A549 (cell line): ENCODE measurements at regions of chr2 and their contacts with region 1.

Region 1: DNA sequence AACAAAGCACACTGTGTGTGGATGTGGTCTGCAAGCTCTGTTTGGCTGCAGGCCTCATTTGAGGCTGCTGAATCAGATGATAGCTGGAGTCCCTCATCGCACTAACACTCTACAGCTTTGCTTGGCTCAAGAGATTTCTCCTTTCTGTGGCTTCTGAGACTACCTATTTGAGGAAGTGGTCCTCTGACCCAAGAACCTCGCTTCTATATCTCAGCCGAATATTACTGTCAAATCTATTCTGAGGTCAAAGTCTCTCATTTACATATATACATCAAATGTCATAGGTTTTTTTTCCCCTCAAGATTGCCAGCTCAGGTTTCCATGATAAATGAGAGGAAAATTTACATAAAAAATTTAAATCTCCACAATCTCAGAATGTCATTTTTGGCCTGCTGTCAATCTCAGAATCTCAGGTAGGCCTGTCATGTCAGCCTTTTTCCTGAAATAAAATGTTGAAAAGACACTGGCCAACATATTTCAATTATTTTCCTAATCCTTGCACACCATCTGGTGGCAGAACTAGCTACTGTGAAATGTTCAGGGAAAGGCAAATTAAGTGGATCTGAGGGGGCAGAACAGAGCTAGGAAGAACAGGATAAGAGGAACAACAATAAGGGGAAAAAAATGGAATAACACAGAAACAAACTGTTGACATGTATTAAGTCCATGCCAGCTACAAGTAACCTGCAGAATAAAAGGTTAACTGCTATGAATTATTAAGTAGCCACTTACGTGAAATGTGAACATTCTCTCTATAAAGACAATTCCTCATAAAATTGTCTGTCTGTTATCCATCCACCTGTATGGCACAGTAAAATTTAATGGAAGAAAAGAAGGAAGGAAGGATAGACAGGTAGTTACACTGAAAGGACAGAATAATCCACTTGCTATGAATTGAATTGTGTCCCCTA is 39.3 kb downstream of the AP1S3 start:
- DNase-seq: peak; percentile 14 to 66
- ATAC-seq: peak; percentile 79 to 81
- H3K4me3 ChIP-seq: no peak overlapping the region
- H3K27ac ChIP-seq: peak overlapping the region; percentile 75 to 87
- H3K4me1 ChIP-seq: peaks cover 76% of the 10 kb centered on the region
- CTCF ChIP-seq: peak; percentile 88
- EP300 ChIP-seq: no peak
- POLR2A ChIP-seq: no peak
- RAD21 ChIP-seq: peak; percentile 92 to 94

Region 2: DNA sequence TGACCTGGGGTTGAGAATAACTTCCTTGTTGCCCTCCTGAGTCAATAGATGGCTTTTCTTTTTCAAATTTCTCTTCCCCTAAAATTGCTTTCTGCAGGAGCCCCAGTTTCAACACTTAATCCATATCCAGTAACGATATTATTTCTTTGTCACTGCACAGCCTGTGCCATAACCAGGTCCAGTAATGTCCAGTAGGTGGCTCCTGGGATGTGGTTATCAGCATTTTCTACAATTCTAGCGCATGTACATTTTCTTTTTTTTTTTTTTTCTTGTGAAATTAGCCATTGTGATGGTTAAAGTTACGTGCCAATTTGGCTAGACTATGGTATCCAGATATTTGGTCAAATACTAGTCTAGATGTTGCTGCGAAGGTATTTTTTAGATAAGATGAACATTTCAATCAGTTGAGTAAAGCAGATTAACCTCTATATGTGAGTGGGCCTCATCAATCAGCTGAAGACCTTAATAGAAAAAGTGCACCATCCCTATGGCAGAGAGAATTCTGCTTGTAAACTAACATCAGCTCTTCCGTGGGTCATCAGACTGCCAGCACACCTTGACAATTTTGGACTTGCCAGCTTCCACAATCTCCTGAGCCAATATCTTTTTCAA is 123.0 kb before region 1 on chr2:
- CTCF ChIA-PET with region 1: interaction called, 30 read pairs
- POLR2A ChIA-PET with region 1: no interaction called
- DNase-seq: peak; percentile 48 to 70
- ATAC-seq: peak; percentile 92 to 99
- H3K4me3 ChIP-seq: no peak overlapping the region
- H3K27ac ChIP-seq: peak overlapping the region; percentile 41 to 79
- H3K4me1 ChIP-seq: peaks cover 21% of the 10 kb centered on the region
- CTCF ChIP-seq: peak; percentile 82
- EP300 ChIP-seq: no peak
- POLR2A ChIP-seq: no peak
- RAD21 ChIP-seq: peak; percentile 81 to 86

Region 3: DNA sequence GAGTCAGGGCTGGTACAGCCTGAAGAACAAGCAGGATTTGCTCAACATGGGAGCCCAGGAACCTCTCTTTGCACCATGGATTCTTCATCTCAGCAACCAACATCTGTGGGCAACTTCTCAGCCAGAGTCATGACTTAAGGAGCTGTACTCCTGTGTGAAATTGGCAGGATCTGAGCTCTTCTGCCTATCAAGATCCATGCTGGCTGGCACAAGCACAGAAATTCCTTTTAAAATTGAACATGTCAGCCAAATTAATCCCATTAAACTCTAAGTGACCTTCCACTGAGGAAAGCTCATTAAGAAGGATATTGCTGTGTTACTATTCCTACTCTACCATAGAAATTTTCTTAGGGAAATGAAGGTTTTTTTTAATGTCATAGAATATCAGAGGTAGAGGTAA is 85.4 kb before region 1 on chr2:
- CTCF ChIA-PET with region 1: interaction called, 10 read pairs
- POLR2A ChIA-PET with region 1: no interaction called
- DNase-seq: no peak
- ATAC-seq: no peak
- H3K4me3 ChIP-seq: no peak overlapping the region
- H3K27ac ChIP-seq: no peak overlapping the region
- H3K4me1 ChIP-seq: no peaks in the 10 kb centered on the region
- CTCF ChIP-seq: no peak
- EP300 ChIP-seq: no peak
- POLR2A ChIP-seq: no peak
- RAD21 ChIP-seq: no peak

Region 4: GRCh38 chr2:223734346-223734745 is 63.7 kb before region 1 on chr2:
- CTCF ChIA-PET with region 1: interaction called, 15 read pairs
- POLR2A ChIA-PET with region 1: no interaction called
- DNase-seq: no peak
- ATAC-seq: peak in 1 of 2 experiments; percentile 43; a peak in 2 of 6 replicates
- H3K4me3 ChIP-seq: no peak overlapping the region
- H3K27ac ChIP-seq: peak overlapping the region; percentile 58 to 70
- H3K4me1 ChIP-seq: peaks cover 27% of the 10 kb centered on the region
- CTCF ChIP-seq: no peak
- EP300 ChIP-seq: no peak
- POLR2A ChIP-seq: no peak
- RAD21 ChIP-seq: no peak

Region 5: DNA sequence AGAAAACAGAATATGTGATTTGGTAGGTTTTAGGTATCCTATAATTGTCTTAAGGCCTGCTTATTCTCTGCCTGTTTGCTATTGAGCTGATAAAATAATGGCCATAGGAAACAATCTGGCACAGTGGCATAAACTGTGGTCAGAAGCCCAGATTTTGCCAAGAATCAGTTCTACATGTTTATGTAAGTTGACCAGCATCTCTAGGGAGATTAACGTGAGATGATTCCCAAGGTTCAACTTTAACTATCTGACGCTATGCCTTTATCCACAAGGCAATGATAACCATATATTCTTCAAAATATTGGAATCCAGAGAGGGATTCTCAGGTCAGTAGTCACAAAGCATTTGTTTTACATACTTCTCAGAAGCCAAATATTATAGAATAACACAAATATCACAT is 13.7 kb after region 1 on chr2:
- CTCF ChIA-PET with region 1: interaction called, 11 read pairs
- POLR2A ChIA-PET with region 1: interaction called, 3 read pairs
- DNase-seq: no peak
- ATAC-seq: no peak
- H3K4me3 ChIP-seq: no peak overlapping the region
- H3K27ac ChIP-seq: peak overlapping the region in 1 of 2 experiments; percentile 20; a peak in 1 of 6 replicates
- H3K4me1 ChIP-seq: peaks cover 46% of the 10 kb centered on the region
- CTCF ChIP-seq: no peak
- EP300 ChIP-seq: no peak
- POLR2A ChIP-seq: no peak
- RAD21 ChIP-seq: no peak

Region 6: GRCh38 chr2:223970343-223971128 is 172.5 kb after region 1 on chr2:
- CTCF ChIA-PET with region 1: no interaction called
- POLR2A ChIA-PET with region 1: no interaction called
- DNase-seq: peak in 1 of 2 experiments; percentile 64
- ATAC-seq: peak; percentile 74 to 83; a peak in 5 of 6 replicates
- H3K4me3 ChIP-seq: no peak overlapping the region
- H3K27ac ChIP-seq: no peak overlapping the region
- H3K4me1 ChIP-seq: no peaks in the 10 kb centered on the region
- CTCF ChIP-seq: peak; percentile 96
- EP300 ChIP-seq: no peak
- POLR2A ChIP-seq: no peak
- RAD21 ChIP-seq: peak; percentile 93 to 96